ENCODE measurements at regions of chrX and their contacts with region 1.

Region 1: DNA sequence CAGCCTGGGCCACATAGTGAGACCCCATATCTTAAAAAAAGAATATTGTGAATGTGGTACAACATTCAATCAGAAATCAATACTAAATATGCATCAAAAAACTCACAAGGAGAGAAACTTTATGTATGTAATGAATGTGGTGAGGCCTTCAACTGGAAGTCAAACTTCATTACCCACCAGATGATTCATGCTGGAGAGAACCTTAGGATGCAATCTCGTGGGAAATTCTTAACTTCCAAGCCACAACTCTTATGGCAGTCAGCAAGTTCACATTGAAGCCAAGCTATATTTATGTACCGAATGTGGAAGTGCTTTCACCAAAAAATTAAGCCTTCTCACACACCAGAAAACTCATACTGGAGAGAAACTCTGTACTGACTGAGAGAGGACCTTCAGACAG is 84.5 kb upstream of the UXT start:
- DNase-seq: no peak
- H3K4me3 ChIP-seq: no peak overlapping the region
- H3K27ac ChIP-seq: no peak overlapping the region
- H3K4me1 ChIP-seq: no peaks in the 10 kb centered on the region
- CTCF ChIP-seq: no peak

Region 2: GRCh38 chrX:47687263-47687662 is 56.2 kb before region 1 on chrX:
- CTCF ChIA-PET with region 1: no interaction called
- POLR2A ChIA-PET with region 1: interaction called, 3 read pairs
- intact Hi-C with region 1: loop called (anchors 10 kb)
- DNase-seq: no peak
- H3K4me3 ChIP-seq: no peak overlapping the region
- H3K27ac ChIP-seq: no peak overlapping the region
- H3K4me1 ChIP-seq: no peaks in the 10 kb centered on the region
- CTCF ChIP-seq: no peak

Measured in OCI-LY7 (cell line).